Activated CD8-positive, alpha-beta T cell treated with anti-CD3 and anti-CD28 coated beads, Interleukin-2, amount 10 ng/mL, durations not matched to agents 7 days and 5 days (primary cell): ENCODE measurements at regions of chr3 and their contacts with region 1.

Region 1: GRCh38 chr3:151146071-151146730 is 56.8 kb downstream of the GPR171 start:
- DNase-seq: peak; percentile 73
- ATAC-seq: peak; percentile 93
- H3K4me3 Mint-ChIP-seq: no peak overlapping the region
- H3K27ac Mint-ChIP-seq: no peak overlapping the region
- H3K4me1 Mint-ChIP-seq: no peaks in the 10 kb centered on the region
- H3K27me3 Mint-ChIP-seq: peaks cover 9% of the 10 kb centered on the region

Region 2: DNA sequence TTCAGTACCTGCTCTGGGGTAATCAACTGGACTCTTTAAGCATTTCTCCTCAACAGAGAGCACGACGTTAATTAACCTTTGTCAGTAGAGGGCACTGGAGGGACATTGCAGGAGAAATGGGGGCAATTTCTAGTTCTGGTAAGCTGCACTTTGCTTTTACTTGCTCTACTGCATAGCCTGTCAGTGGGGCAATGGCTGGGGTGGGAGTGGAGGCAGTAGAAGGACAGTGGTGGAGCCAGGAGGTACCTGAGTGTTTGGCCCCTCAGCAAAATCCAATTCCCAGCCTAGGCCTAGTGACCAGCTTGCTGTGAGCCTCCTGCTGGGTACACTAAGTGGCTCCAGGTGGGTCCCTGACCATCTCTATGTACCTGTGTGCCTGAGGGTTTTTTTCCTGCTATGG is 79.0 kb before region 1 on chr3:
- CTCF ChIA-PET with region 1: interaction called, 55 read pairs
- POLR2A ChIA-PET with region 1: no interaction called
- DNase-seq: peak; percentile 37
- ATAC-seq: no peak
- H3K4me3 Mint-ChIP-seq: no peak overlapping the region
- H3K27ac Mint-ChIP-seq: no peak overlapping the region
- H3K4me1 Mint-ChIP-seq: no peaks in the 10 kb centered on the region
- H3K27me3 Mint-ChIP-seq: peaks cover 15% of the 10 kb centered on the region

Region 3: DNA sequence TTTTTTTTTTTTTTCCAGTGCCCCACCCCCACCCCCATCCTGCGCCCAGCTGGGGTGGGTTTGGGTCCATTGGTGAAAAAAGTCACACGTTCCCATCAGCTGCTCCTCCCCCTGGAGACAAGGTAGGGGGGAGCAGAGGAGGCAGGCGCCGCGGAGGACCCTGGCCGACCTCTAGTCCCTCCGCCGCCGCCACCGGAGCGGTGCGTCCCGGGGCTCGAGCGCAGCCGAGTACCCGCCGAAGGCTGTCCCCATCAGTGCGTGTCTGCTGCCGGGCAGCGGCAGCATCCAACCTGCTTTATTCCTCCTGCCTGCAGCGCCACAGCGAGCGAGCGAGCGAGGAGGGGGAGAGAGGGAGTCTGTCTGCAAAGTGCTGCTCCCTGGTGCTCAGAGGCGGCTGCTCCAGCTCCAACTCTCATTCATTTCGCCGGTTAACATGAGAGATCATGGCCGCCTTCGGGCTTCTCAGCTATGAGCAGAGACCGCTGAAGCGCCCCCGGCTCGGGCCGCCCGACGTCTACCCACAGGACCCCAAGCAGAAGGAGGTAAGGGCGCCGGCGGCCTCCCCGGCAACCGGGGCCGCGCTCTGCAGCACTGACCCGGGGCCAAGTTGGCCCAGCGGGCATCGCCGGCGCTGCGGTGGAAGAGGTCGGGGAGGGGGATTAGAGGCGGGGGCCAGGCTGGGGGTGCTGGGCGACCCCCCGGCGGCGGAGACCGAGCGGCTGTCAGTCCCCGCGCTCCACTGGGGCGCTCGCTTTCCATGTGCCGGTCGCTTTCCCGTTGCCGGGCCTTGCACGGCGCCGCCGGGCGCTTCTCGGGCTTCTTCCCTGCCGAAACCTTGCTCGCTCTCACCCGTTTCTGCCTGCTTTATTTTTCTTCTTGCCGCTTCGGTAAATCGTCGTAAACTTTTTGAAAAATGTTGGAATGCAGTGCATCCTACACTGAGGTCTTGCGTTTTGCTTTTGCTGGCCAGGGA is 59.4 kb before region 1 on chr3:
- CTCF ChIA-PET with region 1: interaction called, 66 read pairs
- POLR2A ChIA-PET with region 1: interaction called, 3 read pairs
- DNase-seq: peak; percentile 80
- ATAC-seq: peak; percentile 87
- H3K4me3 Mint-ChIP-seq: peak overlapping the region; percentile 80
- H3K27ac Mint-ChIP-seq: no peak overlapping the region
- H3K4me1 Mint-ChIP-seq: peaks cover 13% of the 10 kb centered on the region
- H3K27me3 Mint-ChIP-seq: peaks cover 52% of the 10 kb centered on the region

Region 4: DNA sequence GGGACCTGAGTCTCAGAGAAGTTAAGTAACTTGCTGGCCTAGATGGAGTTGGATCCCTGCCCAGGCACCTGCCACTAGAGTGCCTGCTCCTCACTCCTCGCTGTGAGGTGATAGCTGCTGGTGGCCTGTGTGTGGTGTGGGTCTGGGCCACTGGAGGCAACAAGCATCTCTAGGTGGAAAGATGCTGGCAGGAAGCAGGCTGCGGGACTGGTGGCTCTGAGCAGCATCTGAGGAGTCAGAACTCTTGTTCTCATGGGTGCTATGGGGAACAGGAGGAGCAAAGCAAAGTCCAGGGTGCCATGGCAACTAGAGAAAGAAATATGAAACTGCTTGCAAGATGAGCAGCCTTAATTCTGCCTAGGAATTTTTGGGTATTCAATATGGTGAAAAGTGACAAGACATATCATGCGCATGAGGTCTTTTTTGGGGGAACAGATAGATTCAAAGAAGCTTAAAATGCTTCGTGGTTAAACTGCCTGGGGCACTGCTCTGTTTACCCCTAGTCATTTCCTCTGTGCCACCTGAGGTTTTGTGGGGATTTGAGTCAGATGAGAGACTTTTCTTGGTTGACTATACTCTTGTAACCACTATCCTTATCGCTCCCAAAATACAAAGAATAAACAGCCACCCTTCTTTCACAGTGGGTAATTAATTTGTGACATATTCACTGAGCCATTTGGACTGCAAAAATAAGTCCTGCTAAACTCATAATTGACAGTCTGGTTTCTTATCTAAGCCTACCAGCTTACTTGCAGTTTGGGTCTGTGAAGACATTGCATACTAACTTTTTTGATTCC is 10.5 kb before region 1 on chr3:
- CTCF ChIA-PET with region 1: interaction called, 16 read pairs
- POLR2A ChIA-PET with region 1: interaction called, 3 read pairs
- DNase-seq: peak; percentile 81
- ATAC-seq: peak; percentile 93
- H3K4me3 Mint-ChIP-seq: peak overlapping the region; percentile 36
- H3K27ac Mint-ChIP-seq: peak overlapping the region; percentile 86
- H3K4me1 Mint-ChIP-seq: peaks cover 27% of the 10 kb centered on the region
- H3K27me3 Mint-ChIP-seq: peaks cover 5% of the 10 kb centered on the region

Region 5: GRCh38 chr3:151156618-151157216 is 10.5 kb after region 1 on chr3:
- CTCF ChIA-PET with region 1: interaction called, 21 read pairs
- POLR2A ChIA-PET with region 1: no interaction called
- DNase-seq: peak; percentile 64
- ATAC-seq: peak; percentile 87
- H3K4me3 Mint-ChIP-seq: no peak overlapping the region
- H3K27ac Mint-ChIP-seq: no peak overlapping the region
- H3K4me1 Mint-ChIP-seq: no peaks in the 10 kb centered on the region
- H3K27me3 Mint-ChIP-seq: peaks cover 6% of the 10 kb centered on the region

Region 6: DNA sequence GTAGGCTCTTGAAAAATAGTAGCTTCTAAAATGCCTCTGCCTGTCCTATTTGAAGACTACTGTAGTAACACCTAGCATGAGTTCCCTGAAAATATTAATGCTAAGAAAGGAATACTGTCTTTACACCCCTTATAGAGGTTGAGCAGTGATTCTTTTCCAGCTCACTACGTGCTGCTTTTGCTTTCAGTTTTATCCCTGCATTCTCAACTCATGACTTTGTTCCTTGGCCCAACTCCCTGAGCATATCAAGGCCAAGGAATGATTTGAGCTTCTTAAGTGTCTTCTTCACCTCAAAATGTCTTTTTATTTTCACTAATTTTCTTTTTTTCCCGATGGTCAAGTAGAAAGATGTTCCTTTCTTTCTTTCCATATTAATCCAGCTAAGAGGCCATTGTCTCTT is 199.7 kb after region 1 on chr3:
- CTCF ChIA-PET with region 1: no interaction called
- POLR2A ChIA-PET with region 1: no interaction called
- DNase-seq: no peak
- ATAC-seq: no peak
- H3K4me3 Mint-ChIP-seq: no peak overlapping the region
- H3K27ac Mint-ChIP-seq: no peak overlapping the region
- H3K4me1 Mint-ChIP-seq: no peaks in the 10 kb centered on the region
- H3K27me3 Mint-ChIP-seq: peaks cover 27% of the 10 kb centered on the region